Dorsolateral prefrontal cortex (tissue), 120 donors: ENCODE measurements at regions of chr21 and their contacts with region 1.

Region 1: GRCh38 chr21:45287438-45288391 is at the start of gene POFUT2:
- DNase-seq: peak; percentile 91 to 99 (median 94)
- H3K4me3 ChIP-seq: peak within 1 kb of the TSS; percentile 55 to 89 (median 75)
- H3K27ac ChIP-seq: peak within 1 kb of the TSS in 39 of 59 donors; percentile 25 to 90 (median 65)
- H3K27me3 ChIP-seq: no peaks in the 10 kb centered on the region
- CTCF ChIP-seq: peak in 33 of 56 donors; percentile 8 to 50 (median 23)
- total RNA-seq, gene POFUT2: 13.5 to 37.4 (median 20.5) TPM

Region 2: GRCh38 chr21:45140346-45140940 is 147.3 kb before region 1 on chr21:
- intact Hi-C with region 1: loop called (anchors 5 to 10 kb)
- DNase-seq: peak; percentile 47 to 84 (median 76)
- H3K4me3 ChIP-seq: no peak overlapping the region
- H3K27ac ChIP-seq: no peak overlapping the region
- H3K27me3 ChIP-seq: no peaks in the 10 kb centered on the region
- CTCF ChIP-seq: peak in 55 of 56 donors; percentile 24 to 87 (median 77)

Region 3: DNA sequence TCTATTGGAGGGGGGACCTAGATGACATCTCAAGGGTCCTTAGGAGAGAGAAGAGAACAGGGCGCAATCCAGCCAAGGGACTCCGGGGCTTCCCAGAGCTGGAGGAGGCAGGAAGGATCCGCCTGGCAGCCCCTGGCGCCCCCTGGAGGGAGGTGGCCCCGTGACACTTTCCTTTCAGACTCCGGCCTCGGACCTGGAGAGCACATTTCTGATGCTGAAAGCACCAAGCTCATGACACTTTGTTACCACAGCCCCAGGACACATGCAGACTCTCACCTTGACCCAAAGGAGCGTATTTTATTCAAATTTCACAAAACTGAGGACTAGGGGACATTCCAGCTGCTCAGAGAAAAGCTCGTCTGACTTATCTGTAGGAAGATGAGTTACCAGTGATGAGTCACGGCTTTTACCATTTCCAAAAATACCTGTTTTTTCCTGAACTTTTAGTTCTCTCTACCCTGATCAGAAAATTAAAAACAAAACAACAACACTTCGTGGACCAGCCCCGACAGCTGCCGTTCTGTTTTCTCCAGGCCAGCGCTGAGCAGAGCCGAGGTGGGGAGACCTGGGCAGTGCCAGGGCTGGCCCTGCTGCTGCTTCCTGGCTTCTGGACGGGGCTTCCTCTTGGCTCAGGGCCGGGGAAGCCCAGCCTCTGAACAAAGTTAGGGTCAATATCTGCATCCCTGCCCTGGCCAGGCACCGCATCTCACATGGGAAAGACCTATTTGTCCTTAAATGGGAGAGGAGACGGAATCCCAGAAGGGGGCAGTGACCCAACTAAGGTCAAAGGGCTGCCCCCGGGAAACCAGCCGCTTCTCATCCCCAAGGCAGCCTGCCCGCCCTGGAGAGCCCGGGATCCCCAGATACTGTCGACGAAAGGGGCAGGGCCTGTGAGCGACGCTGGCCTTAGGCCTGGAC is 21.6 kb after region 1 on chr21:
- intact Hi-C with region 1: loop called in 1 of 2 experiments (anchors 2 kb)
- DNase-seq: peak in 6 of 10 donors; percentile 33 to 62 (median 46)
- H3K4me3 ChIP-seq: no peak overlapping the region
- H3K27ac ChIP-seq: peak overlapping the region in 35 of 59 donors; percentile 9 to 75 (median 37)
- H3K27me3 ChIP-seq: peaks cover 0 to 4% (median 0%) of the 10 kb centered on the region in 45 donors
- CTCF ChIP-seq: peak in 55 of 56 donors; percentile 20 to 68 (median 51)

Region 4: DNA sequence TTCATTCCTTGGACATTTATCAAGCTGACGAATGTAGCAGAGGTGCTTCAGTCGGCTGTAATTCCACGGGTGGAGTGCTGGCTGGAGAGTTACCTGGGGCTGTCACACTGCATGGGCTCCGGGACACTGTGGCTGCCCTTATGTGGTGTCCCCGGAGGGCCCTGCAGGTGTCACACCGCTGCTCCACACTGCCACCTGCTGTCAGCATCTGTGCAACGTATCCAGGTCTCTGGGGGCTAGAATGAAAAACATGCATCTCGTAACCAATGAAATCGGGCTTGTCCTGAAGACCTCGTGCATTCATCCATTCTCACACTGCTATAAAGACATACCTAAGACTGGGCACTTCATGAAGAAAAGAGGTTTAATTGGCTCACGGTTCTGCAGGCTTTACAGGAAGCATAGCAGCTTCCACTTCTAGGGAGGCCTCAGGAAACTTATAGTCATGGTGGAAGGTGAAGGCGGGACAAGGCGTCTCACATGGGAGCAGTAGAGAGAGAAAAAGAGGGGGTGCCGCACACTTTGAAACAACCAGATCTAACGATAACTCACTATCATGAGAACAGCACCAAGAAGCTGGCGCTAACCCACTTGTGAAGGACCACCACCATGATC is 309.1 kb after region 1 on chr21:
- intact Hi-C with region 1: no loop called
- DNase-seq: peak in 8 of 10 donors; percentile 29 to 68 (median 48)
- H3K4me3 ChIP-seq: no peak overlapping the region
- H3K27ac ChIP-seq: no peak overlapping the region
- H3K27me3 ChIP-seq: peaks cover 0 to 54% (median 16%) of the 10 kb centered on the region in 45 donors
- CTCF ChIP-seq: peak; percentile 30 to 82 (median 73)